Activated naive CD8-positive, alpha-beta T cell treated with anti-CD3 and anti-CD28 coated beads, Interleukin-2, amount 10 ng/mL, durations not matched to agents 7 days and 5 days (primary cell): ENCODE measurements at regions of chr14 and their contacts with region 1.

Region 1: GRCh38 chr14:49867831-49868723 is 15.5 kb upstream of the NEMF start:
- DNase-seq: peak; percentile 94
- ATAC-seq: peak; percentile 93
- H3K4me3 Mint-ChIP-seq: peak overlapping the region; percentile 98
- H3K27ac Mint-ChIP-seq: peak overlapping the region; percentile 98
- H3K4me1 Mint-ChIP-seq: peaks cover 13% of the 10 kb centered on the region
- H3K27me3 Mint-ChIP-seq: no peaks in the 10 kb centered on the region

Region 2: DNA sequence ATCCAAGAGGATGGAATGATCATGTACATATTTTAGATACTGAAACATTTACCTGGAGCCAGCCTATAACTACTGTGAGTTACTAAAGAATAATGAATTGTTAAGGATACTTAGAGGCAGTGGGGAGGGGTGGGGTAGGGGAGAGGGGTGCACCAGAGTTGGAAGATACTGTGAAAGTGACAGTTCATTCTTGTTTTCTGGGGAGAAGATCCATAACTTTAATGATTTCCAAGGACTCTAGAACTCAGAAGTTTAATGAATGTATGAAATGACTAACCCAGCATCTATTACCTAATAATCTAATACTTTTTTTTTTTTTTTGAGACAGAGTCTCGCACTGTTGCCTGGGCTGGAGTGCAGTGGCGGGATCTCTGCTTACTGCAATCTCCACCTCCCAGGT is 89.7 kb before region 1 on chr14:
- POLR2A ChIA-PET with region 1: no interaction called
- DNase-seq: no peak
- ATAC-seq: no peak
- H3K4me3 Mint-ChIP-seq: no peak overlapping the region
- H3K27ac Mint-ChIP-seq: no peak overlapping the region
- H3K4me1 Mint-ChIP-seq: peaks cover 8% of the 10 kb centered on the region
- H3K27me3 Mint-ChIP-seq: no peaks in the 10 kb centered on the region

Region 3: GRCh38 chr14:49852301-49853157 is 15.5 kb before region 1 on chr14 and contains the start of gene NEMF:
- POLR2A ChIA-PET with region 1: interaction called, 110 read pairs
- DNase-seq: peak; percentile 81
- ATAC-seq: peak; percentile 80
- H3K4me3 Mint-ChIP-seq: peak within 1 kb of the TSS; percentile 99
- H3K27ac Mint-ChIP-seq: peak within 1 kb of the TSS; percentile 99
- H3K4me1 Mint-ChIP-seq: peaks cover 29% of the 10 kb centered on the region
- H3K27me3 Mint-ChIP-seq: no peaks in the 10 kb centered on the region
- total RNA-seq, gene NEMF: 90.1 to 91.1 TPM

Region 4: DNA sequence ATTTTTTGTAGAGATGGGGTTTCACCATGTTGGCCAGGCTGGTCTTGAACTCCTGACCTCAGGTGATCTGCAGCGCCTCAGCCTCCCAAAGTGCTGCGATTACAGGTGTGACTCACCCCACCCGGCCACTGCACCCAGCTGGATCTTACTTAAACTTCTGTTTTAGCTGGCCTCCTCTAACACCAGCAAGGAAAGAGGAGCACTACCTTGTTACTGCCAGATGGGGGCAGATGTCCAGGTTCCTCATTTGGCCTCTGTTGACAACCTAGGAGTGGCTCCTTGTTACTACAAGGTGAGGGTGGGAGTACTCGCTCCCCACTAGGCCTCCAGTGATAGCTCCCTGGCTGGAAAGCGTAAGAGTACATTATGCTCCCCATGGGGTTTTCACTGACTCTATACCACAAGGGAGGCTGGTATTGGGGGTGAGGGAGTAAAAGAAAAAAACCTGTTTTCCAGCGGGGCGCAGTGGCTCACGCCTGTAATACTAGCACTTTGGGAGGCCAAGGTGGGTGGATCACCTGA is 11.7 kb after region 1 on chr14:
- POLR2A ChIA-PET with region 1: interaction called, 16 read pairs
- DNase-seq: peak; percentile 44
- ATAC-seq: peak; percentile 96
- H3K4me3 Mint-ChIP-seq: no peak overlapping the region
- H3K27ac Mint-ChIP-seq: peak overlapping the region; percentile 46
- H3K4me1 Mint-ChIP-seq: peaks cover 15% of the 10 kb centered on the region
- H3K27me3 Mint-ChIP-seq: no peaks in the 10 kb centered on the region

Region 5: DNA sequence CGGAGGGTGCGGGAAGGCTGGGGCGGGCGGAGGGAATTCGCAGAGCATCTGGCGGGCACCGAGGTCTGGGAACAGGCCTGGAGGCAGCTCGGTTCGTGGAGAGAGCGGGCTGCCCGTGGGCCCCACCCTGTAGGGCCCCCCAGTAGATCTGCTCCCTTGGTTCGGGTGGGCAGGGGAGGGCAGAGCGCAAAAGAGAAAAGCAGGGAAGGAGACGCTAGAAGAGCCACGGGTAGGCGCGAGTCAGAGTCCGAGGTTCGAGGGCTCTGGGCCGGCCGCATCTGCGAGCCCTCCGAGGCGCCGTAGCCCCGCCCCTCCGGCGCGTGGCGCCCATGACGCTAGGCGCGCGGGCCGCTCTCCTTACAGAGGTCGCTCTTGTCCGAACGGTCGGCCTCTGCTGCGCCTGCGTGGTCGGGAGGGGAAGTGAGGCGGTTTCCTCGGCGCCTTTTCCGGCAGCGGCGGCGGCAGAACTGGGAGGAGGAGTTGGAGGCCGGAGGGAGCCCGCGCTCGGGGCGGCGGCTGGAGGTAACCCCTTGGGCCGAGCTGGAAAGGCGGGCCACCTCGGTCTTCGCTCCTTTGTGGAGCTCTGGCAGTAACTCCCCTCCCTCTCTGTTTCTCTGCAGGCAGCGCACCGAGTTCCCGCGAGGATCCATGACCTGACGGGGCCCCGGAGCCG is 24.7 kb after region 1 on chr14 and contains the start of gene ARF6:
- POLR2A ChIA-PET with region 1: interaction called, 53 read pairs
- DNase-seq: peak; percentile 98
- ATAC-seq: peak; percentile 89
- H3K4me3 Mint-ChIP-seq: peak within 1 kb of the TSS; percentile 99
- H3K27ac Mint-ChIP-seq: peak within 1 kb of the TSS; percentile 99
- H3K4me1 Mint-ChIP-seq: peaks cover 16% of the 10 kb centered on the region
- H3K27me3 Mint-ChIP-seq: no peaks in the 10 kb centered on the region
- total RNA-seq, gene ARF6: 162 to 169 TPM

Region 6: GRCh38 chr14:50085570-50086320 is 217.7 kb after region 1 on chr14:
- POLR2A ChIA-PET with region 1: interaction called, 72 read pairs
- DNase-seq: no peak
- ATAC-seq: no peak
- H3K4me3 Mint-ChIP-seq: peak overlapping the region; percentile 69
- H3K27ac Mint-ChIP-seq: peak overlapping the region; percentile 94
- H3K4me1 Mint-ChIP-seq: peaks cover 76% of the 10 kb centered on the region
- H3K27me3 Mint-ChIP-seq: no peaks in the 10 kb centered on the region

Region 7: GRCh38 chr14:50099335-50099734 is 231.3 kb after region 1 on chr14:
- POLR2A ChIA-PET with region 1: interaction called, 58 read pairs
- DNase-seq: no peak
- ATAC-seq: peak; percentile 46
- H3K4me3 Mint-ChIP-seq: peak overlapping the region; percentile 33
- H3K27ac Mint-ChIP-seq: peak overlapping the region; percentile 70
- H3K4me1 Mint-ChIP-seq: peaks cover 56% of the 10 kb centered on the region
- H3K27me3 Mint-ChIP-seq: no peaks in the 10 kb centered on the region

Region 8: GRCh38 chr14:50116181-50116956 is 248.3 kb after region 1 on chr14 and contains the start of gene VCPKMT:
- POLR2A ChIA-PET with region 1: interaction called, 29 read pairs
- DNase-seq: peak; percentile 99
- ATAC-seq: peak; percentile 98
- H3K4me3 Mint-ChIP-seq: peak within 1 kb of the TSS; percentile 97
- H3K27ac Mint-ChIP-seq: peak within 1 kb of the TSS; percentile 99
- H3K4me1 Mint-ChIP-seq: peaks cover 25% of the 10 kb centered on the region
- H3K27me3 Mint-ChIP-seq: no peaks in the 10 kb centered on the region
- total RNA-seq, gene VCPKMT: 12.9 to 14.9 TPM